Dorsolateral prefrontal cortex (tissue), 120 donors: ENCODE measurements at regions of chr11 and their contacts with region 1.

Region 1: GRCh38 chr11:34926101-34926830 is 9.8 kb downstream of the PDHX start:
- DNase-seq: no peak
- H3K4me3 ChIP-seq: no peak overlapping the region
- H3K27ac ChIP-seq: no peak overlapping the region
- H3K27me3 ChIP-seq: no peaks in the 10 kb centered on the region
- CTCF ChIP-seq: peak; percentile 64 to 96 (median 80)

Region 2: GRCh38 chr11:34860034-34860433 is 66.2 kb before region 1 on chr11:
- intact Hi-C with region 1: no loop called
- DNase-seq: no peak
- H3K4me3 ChIP-seq: no peak overlapping the region
- H3K27ac ChIP-seq: no peak overlapping the region
- H3K27me3 ChIP-seq: no peaks in the 10 kb centered on the region
- CTCF ChIP-seq: no peak

Region 3: DNA sequence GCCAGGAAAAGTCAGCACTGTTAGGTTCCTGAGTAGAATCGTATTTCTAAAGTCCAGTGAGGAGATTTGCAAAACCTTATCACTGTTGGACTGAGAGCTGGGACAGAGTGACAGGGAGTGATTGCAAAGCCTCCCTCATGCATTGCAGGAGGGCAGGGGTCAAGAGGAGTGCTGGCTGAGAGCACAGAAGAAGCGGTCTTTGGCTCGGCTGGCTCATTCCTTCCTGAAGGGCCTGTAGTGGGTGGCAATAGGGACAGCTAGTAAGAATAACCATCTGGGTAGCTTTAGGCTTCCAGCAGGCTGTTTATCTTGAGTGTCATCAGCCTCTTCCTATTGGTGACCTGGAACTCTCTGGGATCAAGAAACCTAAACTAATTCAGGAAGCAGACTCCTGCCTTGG is 266.1 kb after region 1 on chr11:
- intact Hi-C with region 1: no loop called
- DNase-seq: no peak
- H3K4me3 ChIP-seq: no peak overlapping the region
- H3K27ac ChIP-seq: no peak overlapping the region
- H3K27me3 ChIP-seq: no peaks in the 10 kb centered on the region
- CTCF ChIP-seq: no peak

Region 4: DNA sequence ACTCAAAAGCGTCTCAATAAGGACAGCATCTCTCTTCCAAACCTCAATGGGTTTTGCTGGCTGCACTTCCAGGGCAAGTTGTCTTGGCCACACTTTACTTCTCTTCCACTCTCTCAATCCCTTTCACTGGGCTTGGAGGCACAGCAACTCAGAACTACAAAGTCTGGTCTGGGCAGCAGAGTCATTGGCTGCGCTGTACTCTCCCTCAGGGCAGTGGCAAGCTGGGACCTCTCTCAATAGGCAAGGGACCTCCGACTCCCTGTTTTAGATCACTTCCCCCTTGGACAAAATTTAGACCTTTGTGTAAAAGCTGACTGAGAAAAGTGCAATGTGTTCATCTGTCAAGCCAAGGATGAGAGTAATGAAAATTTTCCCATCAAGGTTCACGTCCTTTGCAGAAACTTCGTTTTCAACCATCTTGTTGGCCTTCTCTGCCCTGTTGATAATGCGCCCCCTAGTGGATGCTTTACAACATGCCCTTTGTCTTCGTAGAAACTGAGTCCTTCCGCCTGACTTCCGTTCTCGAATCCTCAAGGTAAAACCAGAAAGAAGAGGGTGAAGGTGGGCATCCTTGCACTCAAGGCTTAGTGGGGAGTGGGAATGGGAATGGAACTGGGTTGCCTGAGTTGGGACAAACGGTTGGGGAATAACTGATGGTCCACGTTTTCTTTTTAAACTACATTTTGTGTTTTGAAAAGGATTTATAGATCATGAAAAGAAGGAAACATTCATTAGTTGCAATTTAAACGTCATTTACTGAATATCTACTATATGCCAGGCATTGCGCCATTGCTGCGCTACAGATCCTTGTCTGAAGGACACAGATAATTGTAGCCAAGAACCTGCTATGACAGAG is 311.8 kb after region 1 on chr11:
- intact Hi-C with region 1: loop called (anchors 5 kb)
- DNase-seq: peak in 3 of 10 donors; percentile 14 to 31 (median 27)
- H3K4me3 ChIP-seq: peak overlapping the region in 1 of 59 donors; percentile 9
- H3K27ac ChIP-seq: no peak overlapping the region
- H3K27me3 ChIP-seq: no peaks in the 10 kb centered on the region
- CTCF ChIP-seq: peak; percentile 42 to 88 (median 76)

Region 5: GRCh38 chr11:35305670-35306382 is 379.6 kb after region 1 on chr11:
- intact Hi-C with region 1: loop called in 1 of 2 experiments (anchors 10 kb)
- DNase-seq: no peak
- H3K4me3 ChIP-seq: no peak overlapping the region
- H3K27ac ChIP-seq: peak overlapping the region in 38 of 59 donors; percentile 5 to 87 (median 55)
- H3K27me3 ChIP-seq: no peaks in the 10 kb centered on the region
- CTCF ChIP-seq: peak in 44 of 56 donors; percentile 6 to 53 (median 34)

Region 6: GRCh38 chr11:35485656-35486322 is 559.5 kb after region 1 on chr11:
- intact Hi-C with region 1: loop called in 1 of 2 experiments (anchors 5 kb)
- DNase-seq: peak; percentile 68 to 89 (median 82)
- H3K4me3 ChIP-seq: no peak overlapping the region
- H3K27ac ChIP-seq: peak overlapping the region in 7 of 59 donors; percentile 35 to 56 (median 45)
- H3K27me3 ChIP-seq: no peaks in the 10 kb centered on the region
- CTCF ChIP-seq: peak; percentile 74 to 96 (median 90)